WTC11 (cell line): ENCODE measurements at regions of chr19 and their contacts with region 1.

Region 1: DNA sequence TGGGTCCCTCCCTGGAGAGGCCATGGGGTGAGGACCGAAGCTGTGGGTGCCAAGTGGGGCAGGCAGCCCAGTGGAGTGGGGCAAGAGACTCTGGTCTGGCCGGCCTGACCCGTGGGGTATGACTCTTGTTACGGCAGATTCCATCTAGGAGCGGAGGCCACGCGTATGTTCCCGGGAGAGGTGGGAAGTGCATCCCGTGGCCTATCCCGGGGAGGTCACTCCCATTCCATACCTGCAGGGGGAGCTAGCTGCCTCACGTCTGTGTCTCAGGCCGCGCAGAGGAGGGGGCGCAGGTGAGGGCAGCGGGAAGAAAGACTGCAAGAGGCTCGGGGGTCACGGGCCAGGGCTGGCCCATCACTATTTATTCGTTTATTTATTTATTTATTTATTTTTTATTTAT is 4.9 kb downstream of the CSNK1G2 start:
- DNase-seq: peak; percentile 91
- ATAC-seq: peak; percentile 69
- H3K4me3 Mint-ChIP-seq: no peak overlapping the region
- H3K27ac Mint-ChIP-seq: peak overlapping the region; percentile 98
- H3K4me1 Mint-ChIP-seq: peaks cover 16% of the 10 kb centered on the region
- H3K27me3 Mint-ChIP-seq: no peaks in the 10 kb centered on the region
- CTCF ChIP-seq: peak; percentile 82

Region 2: DNA sequence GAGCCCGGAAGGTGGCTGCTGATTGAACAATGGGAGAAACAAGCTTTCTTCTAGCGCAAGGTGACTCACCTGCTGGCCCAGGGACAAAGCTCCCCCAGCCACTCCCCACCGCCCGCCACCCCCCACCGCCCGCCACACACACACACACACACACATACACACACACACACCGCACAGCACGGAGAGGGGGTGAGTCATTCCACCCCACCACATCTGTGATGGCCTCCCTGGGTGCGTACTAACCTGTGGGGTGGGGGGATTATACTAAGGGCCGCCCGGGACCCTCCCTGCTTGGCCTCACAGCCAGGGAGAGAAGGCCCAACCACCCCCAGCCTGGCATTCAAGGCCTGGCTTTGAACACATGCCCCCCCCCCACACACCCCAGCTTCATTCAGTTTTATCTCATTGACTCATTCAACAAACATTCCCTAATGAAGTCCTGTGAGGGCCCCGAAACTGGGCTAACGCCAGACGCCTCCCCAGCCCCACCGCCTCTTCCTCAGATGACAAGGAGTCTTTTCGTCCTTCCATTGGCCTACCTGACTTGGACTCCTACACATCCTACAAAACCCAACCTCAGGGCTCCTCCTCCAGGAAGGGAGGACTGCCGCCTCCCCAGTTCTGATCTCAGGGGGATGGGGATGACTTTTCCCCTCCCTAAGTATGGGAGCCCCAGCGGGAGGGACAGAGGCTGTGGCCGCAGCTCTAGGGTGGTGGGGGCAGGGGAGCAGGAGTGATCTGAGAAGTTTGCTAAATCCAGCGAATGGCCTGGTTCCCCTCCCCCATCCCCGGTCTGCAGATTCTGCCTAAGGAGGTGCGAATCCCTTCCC is 198.4 kb before region 1 on chr19:
- CTCF ChIA-PET with region 1: no interaction called
- POLR2A ChIA-PET with region 1: no interaction called
- DNase-seq: peak; percentile 70
- ATAC-seq: peak; percentile 23
- H3K4me3 Mint-ChIP-seq: peak overlapping the region; percentile 65
- H3K27ac Mint-ChIP-seq: no peak overlapping the region
- H3K4me1 Mint-ChIP-seq: peaks cover 8% of the 10 kb centered on the region
- H3K27me3 Mint-ChIP-seq: peaks cover 96% of the 10 kb centered on the region
- CTCF ChIP-seq: no peak

Region 3: DNA sequence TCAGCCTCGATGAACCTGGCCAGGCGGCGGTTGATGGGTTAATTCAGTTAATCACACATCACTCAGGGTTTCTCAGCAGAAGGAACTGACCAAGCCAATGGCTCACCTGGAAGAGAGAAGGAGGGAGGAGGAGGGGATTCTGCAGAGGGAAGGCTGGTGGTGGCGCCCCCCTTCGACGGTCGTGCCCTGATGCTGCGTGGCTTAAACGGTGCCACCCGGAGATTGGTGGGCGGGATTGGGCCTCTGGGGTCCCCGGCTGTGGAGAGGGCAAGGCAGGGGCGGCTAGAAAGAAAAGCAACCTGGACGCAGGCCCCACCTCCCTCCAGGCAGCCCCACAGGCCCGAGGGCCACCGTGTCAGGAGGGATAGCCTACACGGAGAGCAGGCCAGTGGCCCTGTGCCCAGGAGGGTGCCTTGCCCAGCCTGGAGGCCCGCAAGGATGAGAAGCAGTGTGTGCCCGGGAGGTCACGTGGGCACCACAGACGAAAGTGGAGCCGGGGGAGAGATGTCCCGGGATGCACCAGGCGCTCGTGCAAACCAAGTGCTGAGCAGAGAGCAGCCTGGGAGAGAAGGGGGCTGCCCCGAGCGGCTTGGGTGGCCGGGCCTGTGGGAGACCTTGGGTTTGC is 11.1 kb after region 1 on chr19:
- CTCF ChIA-PET with region 1: interaction called, 10 read pairs
- POLR2A ChIA-PET with region 1: interaction called, 3 read pairs
- DNase-seq: peak; percentile 64
- ATAC-seq: peak; percentile 57
- H3K4me3 Mint-ChIP-seq: no peak overlapping the region
- H3K27ac Mint-ChIP-seq: peak overlapping the region; percentile 79; the same call in 1 of the 2 replicates
- H3K4me1 Mint-ChIP-seq: peaks cover 4% of the 10 kb centered on the region; the same call in 1 of the 2 replicates
- H3K27me3 Mint-ChIP-seq: no peaks in the 10 kb centered on the region
- CTCF ChIP-seq: no peak